ENCODE measurements at regions of chr2 and their contacts with region 1.

Region 1: GRCh38 chr2:200901459-200902072 is 12.4 kb downstream of the NIF3L1 start:
- DNase-seq: peak; percentile 9
- H3K4me3 ChIP-seq: no peak overlapping the region
- H3K27ac ChIP-seq: no peak overlapping the region
- H3K4me1 ChIP-seq: no peaks in the 10 kb centered on the region
- H3K27me3 ChIP-seq: no peaks in the 10 kb centered on the region
- CTCF ChIP-seq: peak; percentile 66 to 88 (median 84)
- POLR2A ChIP-seq: no peak

Region 2: GRCh38 chr2:201074996-201075395 is 173.4 kb after region 1 on chr2:
- intact Hi-C with region 1: loop called (anchors 5 kb)
- DNase-seq: no peak
- H3K4me3 ChIP-seq: no peak overlapping the region
- H3K27ac ChIP-seq: no peak overlapping the region
- H3K4me1 ChIP-seq: peaks cover 16 to 48% (median 22%) of the 10 kb centered on the region in 3 donors
- H3K27me3 ChIP-seq: no peaks in the 10 kb centered on the region
- CTCF ChIP-seq: no peak
- POLR2A ChIP-seq: no peak

Region 3: GRCh38 chr2:201171259-201171814 is 269.8 kb after region 1 on chr2:
- intact Hi-C with region 1: loop called (anchors 10 kb)
- DNase-seq: no peak
- H3K4me3 ChIP-seq: no peak overlapping the region
- H3K27ac ChIP-seq: no peak overlapping the region
- H3K4me1 ChIP-seq: peaks cover 0 to 14% (median 3%) of the 10 kb centered on the region in 3 donors
- H3K27me3 ChIP-seq: no peaks in the 10 kb centered on the region
- CTCF ChIP-seq: no peak
- POLR2A ChIP-seq: no peak

Measured in esophagus squamous epithelium (tissue), 5 donors.